Breast epithelium (tissue), 4 donors: ENCODE measurements at regions of chr4 and their contacts with region 1.

Region 1: GRCh38 chr4:184343502-184344177 is 126.0 kb upstream of the ENPP6 start:
- DNase-seq: peak; percentile 48 to 66
- H3K4me3 ChIP-seq: peak overlapping the region; percentile 59 to 75 (median 64)
- H3K27ac ChIP-seq: peak overlapping the region; percentile 78 to 79
- H3K4me1 ChIP-seq: no peaks in the 10 kb centered on the region
- H3K27me3 ChIP-seq: no peaks in the 10 kb centered on the region
- CTCF ChIP-seq: no peak
- POLR2A ChIP-seq: no peak

Region 2: GRCh38 chr4:184388106-184388505 is 44.5 kb after region 1 on chr4:
- intact Hi-C with region 1: loop called (anchors 1 kb)
- DNase-seq: no peak
- H3K4me3 ChIP-seq: no peak overlapping the region
- H3K27ac ChIP-seq: no peak overlapping the region
- H3K4me1 ChIP-seq: peaks cover 4% of the 10 kb centered on the region in 2 donors
- H3K27me3 ChIP-seq: no peaks in the 10 kb centered on the region
- CTCF ChIP-seq: no peak
- POLR2A ChIP-seq: no peak